A549 (cell line): ENCODE measurements at regions of chr1 and their contacts with region 1.

Region 1: DNA sequence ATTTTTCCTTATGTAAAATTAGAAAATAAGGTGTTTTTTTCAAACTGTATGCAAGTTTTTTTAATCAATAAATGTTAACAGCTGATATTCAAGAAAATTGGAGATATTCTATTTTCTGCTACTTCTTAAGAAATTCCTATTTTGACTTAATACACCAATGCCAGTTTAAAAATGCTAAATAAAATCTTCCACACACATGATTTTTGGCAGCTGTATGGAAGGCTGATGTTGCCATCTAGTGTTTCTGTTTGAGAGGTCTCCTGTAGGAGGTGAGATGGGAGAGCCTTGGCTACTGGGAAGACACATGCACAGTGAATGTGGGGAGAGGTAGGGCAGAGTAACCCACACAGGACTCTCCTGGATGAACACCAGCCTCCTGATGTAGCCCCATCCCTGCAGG is 29.2 kb upstream of the OR2B11 start:
- DNase-seq: peak; percentile 4 to 31
- ATAC-seq: peak; percentile 66; a peak in 3 of 6 replicates
- H3K4me3 ChIP-seq: no peak overlapping the region
- H3K27ac ChIP-seq: no peak overlapping the region
- H3K4me1 ChIP-seq: no peaks in the 10 kb centered on the region
- CTCF ChIP-seq: peak; percentile 17; the same call in 1 of the 3 replicates
- EP300 ChIP-seq: no peak
- POLR2A ChIP-seq: no peak
- RAD21 ChIP-seq: peak; percentile 27 to 50; a peak in 3 of 5 replicates

Region 2: GRCh38 chr1:247390116-247390791 is 96.8 kb before region 1 on chr1:
- CTCF ChIA-PET with region 1: interaction called, 13 read pairs
- POLR2A ChIA-PET with region 1: no interaction called
- DNase-seq: peak; percentile 65 to 75
- ATAC-seq: peak; percentile 91 to 98
- H3K4me3 ChIP-seq: no peak overlapping the region
- H3K27ac ChIP-seq: no peak overlapping the region
- H3K4me1 ChIP-seq: no peaks in the 10 kb centered on the region
- CTCF ChIP-seq: peak; percentile 45; the same call in 2 of the 3 replicates
- EP300 ChIP-seq: no peak
- POLR2A ChIP-seq: no peak
- RAD21 ChIP-seq: peak; percentile 36 to 68; a peak in 3 of 5 replicates